CD14-positive monocyte (primary cell): ENCODE measurements at regions of chr6 and their contacts with region 1.

Region 1: DNA sequence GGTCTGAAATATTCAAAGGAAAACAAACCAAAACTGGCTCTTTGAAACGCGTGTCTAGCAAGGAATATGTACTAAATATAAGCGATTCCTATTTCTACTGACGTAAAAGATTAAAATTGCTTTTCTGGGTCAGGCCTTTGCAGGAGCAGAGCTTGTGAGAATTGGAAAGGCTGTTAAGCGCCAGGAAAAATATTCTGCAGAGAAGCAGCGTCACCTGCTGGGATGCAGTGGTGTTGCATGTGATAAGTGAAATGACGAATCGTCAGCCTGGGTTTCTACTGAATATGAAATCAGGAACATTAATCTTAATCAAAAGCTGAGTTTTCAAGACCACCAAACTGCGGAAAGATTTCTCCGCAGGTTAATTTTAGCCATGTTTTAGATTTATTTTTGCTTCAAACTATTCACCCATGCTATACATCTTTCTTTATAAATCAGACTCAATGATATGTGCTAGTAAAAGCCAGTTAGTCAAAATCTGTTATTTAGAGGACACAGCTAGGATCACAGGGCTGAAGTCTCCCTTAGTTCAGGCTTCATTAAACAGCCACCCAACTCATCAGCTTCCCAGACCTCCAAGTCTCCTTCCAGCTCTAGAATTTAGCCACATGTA is 67.4 kb downstream of the ALDH8A1 start:
- DNase-seq: peak; percentile 44 to 64 (median 57)
- H3K4me3 ChIP-seq: no peak overlapping the region
- H3K4me3 Mint-ChIP-seq: no peak overlapping the region
- H3K27ac ChIP-seq: no peak overlapping the region
- H3K27ac Mint-ChIP-seq: peak overlapping the region in 1 of 7 donors; percentile 45
- H3K4me1 ChIP-seq: no peaks in the 10 kb centered on the region
- H3K4me1 Mint-ChIP-seq: peaks cover 8% of the 10 kb centered on the region
- H3K27me3 ChIP-seq: no peaks in the 10 kb centered on the region
- H3K27me3 Mint-ChIP-seq: peaks cover 0 to 4% (median 1%) of the 10 kb centered on the region in 3 donors
- CTCF ChIP-seq: peak; percentile 91

Region 2: GRCh38 chr6:134123666-134124208 is 758.8 kb before region 1 on chr6:
- intact Hi-C with region 1: loop called in 1 of 2 experiments (anchors 5 kb)
- DNase-seq: peak; percentile 23 to 55 (median 39)
- H3K4me3 ChIP-seq: no peak overlapping the region
- H3K4me3 Mint-ChIP-seq: no peak overlapping the region
- H3K27ac ChIP-seq: no peak overlapping the region
- H3K27ac Mint-ChIP-seq: no peak overlapping the region
- H3K4me1 ChIP-seq: no peaks in the 10 kb centered on the region
- H3K4me1 Mint-ChIP-seq: no peaks in the 10 kb centered on the region
- H3K27me3 ChIP-seq: no peaks in the 10 kb centered on the region
- H3K27me3 Mint-ChIP-seq: peaks cover 0 to 2% (median 0%) of the 10 kb centered on the region in 3 donors
- CTCF ChIP-seq: peak; percentile 93

Region 3: DNA sequence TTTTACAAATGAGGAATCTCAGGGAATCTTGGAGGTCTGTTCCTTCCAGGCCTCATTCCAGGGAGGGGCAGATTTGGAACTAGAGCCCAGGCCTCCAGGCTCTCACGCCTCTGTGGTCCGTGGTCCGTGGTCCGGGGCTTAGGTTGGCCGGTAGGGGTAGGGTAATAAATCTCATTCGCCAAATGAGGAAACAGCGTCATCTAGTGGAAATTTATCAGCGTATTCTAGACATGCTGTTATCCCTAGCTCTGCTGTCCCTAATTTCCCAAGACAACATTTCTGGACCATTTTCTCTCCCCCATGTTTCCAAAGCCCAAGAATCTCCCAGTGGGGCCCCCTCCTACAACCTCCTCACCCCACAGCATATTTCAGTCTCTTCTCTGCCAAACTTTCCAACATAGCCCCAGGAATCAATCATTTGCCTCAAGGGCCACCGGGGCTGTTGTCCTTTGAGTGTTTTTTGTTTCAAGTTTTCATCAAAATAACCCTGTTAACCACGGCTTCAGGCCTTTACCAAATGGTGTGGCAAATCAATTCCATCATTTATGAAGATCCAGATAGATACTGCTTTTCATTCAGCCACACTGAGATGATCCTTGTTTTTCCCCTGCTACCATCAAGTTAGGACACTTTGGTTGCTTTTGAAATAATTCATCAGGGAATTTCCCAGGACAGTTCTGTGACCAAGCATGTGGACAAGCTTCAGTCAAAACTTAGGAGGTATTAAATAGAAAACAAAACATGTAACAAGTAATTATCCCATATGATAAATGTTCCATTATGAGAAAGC is 59.4 kb before region 1 on chr6:
- intact Hi-C with region 1: loop called in 1 of 2 experiments (anchors 5 kb)
- DNase-seq: peak; percentile 71 to 88 (median 78)
- H3K4me3 ChIP-seq: no peak overlapping the region
- H3K4me3 Mint-ChIP-seq: no peak overlapping the region
- H3K27ac ChIP-seq: no peak overlapping the region
- H3K27ac Mint-ChIP-seq: peak overlapping the region in 2 of 7 donors; percentile 0 to 23
- H3K4me1 ChIP-seq: no peaks in the 10 kb centered on the region
- H3K4me1 Mint-ChIP-seq: peaks cover 6% of the 10 kb centered on the region
- H3K27me3 ChIP-seq: no peaks in the 10 kb centered on the region
- H3K27me3 Mint-ChIP-seq: peaks cover 0 to 2% (median 0%) of the 10 kb centered on the region in 3 donors
- CTCF ChIP-seq: peak; percentile 90